GM18951 (cell line): ENCODE measurements at regions of chr17 and their contacts with region 1.

Region 1: DNA sequence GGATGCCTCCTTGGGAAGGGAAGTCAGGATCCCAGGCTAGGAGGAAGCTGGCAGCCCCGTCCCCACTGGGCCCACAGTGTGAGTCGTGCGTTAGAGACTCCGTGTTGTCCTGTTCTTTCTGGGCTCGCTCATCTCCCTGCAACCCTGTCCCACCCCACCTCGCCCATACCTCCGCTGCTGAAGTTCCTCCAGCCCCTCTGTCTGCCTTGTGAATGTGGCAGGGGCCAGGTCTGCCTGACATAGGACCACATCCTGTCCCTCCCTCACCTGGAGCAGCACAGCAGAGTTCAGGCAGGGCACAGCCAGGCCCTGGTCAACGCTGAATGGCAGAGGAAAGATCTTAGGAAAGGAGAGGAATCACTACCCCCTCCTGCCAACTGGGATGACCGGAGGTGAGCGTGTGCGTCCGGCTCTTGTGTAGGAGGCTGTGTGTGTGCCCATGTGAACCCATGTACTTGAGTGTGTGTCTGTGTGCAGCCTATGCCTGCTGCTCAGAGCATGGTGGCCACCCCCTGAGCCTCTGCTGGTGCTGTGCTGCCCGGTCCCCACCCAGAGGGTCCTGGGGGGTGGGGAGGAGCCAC is 12.8 kb downstream of the KCNJ18 start:
- POLR2A ChIP-seq: no peak

Region 2: GRCh38 chr17:21007646-21008045 is 697.5 kb before region 1 on chr17:
- in situ Hi-C with region 1: no loop called
- POLR2A ChIP-seq: no peak

Region 3: DNA sequence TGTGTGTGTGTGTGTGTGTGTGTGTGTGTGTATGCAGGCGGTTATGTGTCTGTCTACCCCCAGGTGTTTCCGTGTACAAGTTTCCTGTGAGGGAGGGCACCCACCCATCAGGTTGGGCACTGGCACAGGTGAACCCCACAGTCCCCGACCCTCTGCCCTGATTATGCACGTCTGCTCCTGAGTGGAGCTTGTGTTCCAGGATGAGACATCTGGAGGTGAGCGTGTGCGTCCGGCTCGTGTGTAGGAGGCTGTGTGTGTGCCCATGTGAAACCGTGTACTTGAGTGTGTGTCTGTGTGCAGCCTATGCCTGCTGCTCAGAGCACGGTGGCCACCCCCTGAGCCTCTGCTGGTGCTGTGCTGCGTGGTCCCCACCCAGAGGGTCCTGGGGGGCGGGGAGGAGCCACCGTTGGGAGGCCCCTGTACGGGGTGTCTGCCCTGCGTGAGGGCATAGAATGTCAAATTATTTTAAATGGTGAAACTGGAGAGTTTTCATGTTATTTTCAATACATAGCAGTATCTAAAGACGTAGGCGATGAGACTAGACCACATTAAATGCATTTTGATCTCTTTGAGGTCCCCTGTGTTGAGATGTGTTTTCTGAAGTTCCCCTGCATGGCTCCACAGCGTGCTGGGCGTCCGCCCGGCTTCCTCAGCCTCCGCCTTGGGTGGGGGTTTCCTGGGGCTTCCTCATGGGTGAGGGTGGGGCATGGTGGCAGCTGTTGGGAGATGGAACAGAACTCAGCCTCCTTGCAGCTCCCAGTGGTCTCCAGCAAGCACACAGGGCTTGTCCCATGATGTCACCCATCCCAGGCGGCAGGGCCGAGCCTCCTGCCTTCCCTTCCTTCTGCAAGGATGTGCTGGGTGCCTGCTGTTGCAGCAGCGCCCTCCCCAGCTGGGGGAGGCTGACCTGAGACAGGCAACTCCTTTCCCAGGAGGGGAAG is 285.5 kb before region 1 on chr17:
- in situ Hi-C with region 1: loop called (anchors 5 kb)
- POLR2A ChIP-seq: no peak